PC-9 (cell line): ENCODE measurements at regions of chr17 and their contacts with region 1.

Region 1: DNA sequence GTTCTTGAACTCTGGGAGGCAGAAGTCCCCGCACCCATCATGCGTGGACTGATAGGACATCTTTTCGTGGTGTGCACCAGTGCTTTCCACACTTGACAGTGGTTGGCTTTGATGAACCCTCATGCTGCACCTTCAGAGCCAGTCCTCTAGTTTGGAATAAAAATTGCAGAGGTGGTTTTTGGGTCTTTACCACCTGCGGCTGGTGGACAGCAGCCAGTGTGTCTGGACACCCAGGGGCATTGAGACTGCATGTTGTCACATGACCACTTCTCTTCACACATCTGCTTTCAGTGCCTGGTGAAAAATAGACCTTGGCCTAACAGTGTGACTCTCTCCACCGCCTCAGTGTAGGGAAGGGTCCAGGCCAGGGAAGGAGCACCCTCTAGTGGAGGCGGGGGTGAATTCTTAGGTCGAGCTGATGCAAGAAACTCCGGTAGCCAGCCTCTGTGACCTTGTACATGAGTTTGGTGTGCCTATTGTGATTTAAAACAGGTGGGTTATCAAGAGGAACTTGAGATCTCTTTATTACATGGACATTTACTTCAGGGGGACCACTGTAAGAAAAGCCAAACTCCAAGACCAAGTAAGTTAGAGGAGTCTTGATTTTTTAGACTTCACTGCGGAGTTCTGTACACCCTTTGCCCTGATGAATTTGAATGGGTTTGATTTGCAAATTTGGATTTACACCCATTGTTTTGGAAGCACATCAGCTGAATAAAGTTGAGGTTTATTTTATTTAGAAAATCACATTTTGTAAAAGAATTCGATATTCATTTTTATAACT is 17.9 kb downstream of the GOSR2 start:
- DNase-seq: peak; percentile 50 to 64
- H3K4me3 ChIP-seq: no peak overlapping the region
- H3K27ac ChIP-seq: no peak overlapping the region
- H3K4me1 ChIP-seq: peaks cover 28% of the 10 kb centered on the region
- H3K27me3 ChIP-seq: no peaks in the 10 kb centered on the region
- CTCF ChIP-seq: peak; percentile 89

Region 2: DNA sequence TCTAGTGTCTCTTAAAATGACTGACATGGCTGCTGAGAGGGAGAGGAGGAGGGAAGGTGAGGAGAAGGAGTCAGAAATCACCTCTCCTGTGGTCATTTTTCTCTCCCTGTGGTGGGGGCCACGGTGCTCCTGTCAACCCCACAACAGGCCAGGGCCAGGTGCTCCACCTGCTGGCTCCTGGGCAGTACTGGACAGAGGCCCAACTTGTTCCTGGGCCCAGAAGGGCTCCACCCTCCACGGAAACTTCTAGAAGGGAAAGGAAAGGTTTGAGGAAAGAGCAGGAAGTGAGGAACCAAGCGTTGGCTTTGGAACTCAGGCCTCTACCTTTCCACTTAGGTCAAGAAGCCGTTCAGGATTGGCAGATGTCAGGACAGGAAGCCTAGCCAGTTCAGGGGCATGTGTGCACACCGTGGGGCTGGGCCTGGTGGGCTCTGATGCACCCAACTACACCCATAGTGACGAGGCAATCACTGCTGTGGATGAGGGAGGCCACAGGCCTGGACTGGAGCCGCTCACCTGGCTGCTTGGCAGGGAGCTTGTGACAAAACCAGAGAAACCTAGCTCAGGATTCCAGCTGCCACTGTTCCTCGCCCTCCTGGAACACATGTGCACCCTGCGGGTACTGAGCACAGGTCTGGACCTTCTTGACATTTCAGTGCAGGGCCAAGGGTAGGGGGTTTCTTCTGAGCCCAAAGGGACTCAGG is 158.4 kb before region 1 on chr17:
- CTCF ChIA-PET with region 1: no interaction called
- POLR2A ChIA-PET with region 1: no interaction called
- intact Hi-C with region 1: loop called (anchors 10 kb)
- DNase-seq: peak; percentile 52 to 57
- H3K4me3 ChIP-seq: no peak overlapping the region
- H3K27ac ChIP-seq: no peak overlapping the region
- H3K4me1 ChIP-seq: peaks cover 33% of the 10 kb centered on the region
- H3K27me3 ChIP-seq: no peaks in the 10 kb centered on the region
- CTCF ChIP-seq: peak; percentile 93

Region 3: DNA sequence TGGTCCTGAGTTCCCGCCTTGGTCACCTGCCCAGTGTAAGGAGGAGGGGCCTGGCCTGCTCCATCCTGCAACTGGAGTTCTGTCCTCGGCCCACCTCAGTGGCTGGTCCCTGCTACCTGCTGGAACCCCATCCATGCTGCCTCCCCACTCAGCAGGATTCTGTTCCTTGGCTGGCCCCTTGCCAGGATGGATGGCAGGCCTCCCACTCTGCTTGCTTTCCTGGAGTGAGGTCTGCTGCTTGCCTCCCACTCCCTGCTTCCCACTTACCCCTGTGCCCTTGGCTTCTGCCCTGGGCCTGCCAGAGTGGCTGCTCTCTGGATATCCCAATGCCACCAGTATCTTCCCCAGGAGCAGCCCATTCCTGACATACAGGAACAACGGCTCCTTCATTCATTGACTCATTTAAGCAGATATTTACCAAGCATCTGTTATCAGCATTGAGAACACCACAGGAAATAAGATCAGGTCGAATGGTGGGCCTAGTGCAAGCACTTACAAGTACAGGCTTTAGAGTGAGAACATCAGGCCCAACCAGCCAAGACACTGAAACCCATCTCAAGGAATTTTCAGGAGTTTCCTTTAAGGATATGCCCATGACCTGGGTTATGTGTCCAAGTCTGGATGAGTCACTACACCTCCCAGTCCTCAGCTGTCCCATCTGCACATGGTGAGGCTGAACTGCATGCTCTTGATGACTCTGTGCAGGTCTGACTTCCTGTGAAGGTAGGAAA is 55.2 kb after region 1 on chr17:
- CTCF ChIA-PET with region 1: interaction called, 10 read pairs
- POLR2A ChIA-PET with region 1: interaction called, 4 read pairs
- intact Hi-C with region 1: loop called (anchors 1 kb)
- DNase-seq: no peak
- H3K4me3 ChIP-seq: no peak overlapping the region
- H3K27ac ChIP-seq: no peak overlapping the region
- H3K4me1 ChIP-seq: no peaks in the 10 kb centered on the region
- H3K27me3 ChIP-seq: no peaks in the 10 kb centered on the region
- CTCF ChIP-seq: no peak

Region 4: GRCh38 chr17:47315451-47316266 is 374.8 kb after region 1 on chr17:
- CTCF ChIA-PET with region 1: interaction called, 3 read pairs
- POLR2A ChIA-PET with region 1: no interaction called
- intact Hi-C with region 1: loop called (anchors 1 kb)
- DNase-seq: peak in 1 of 2 experiments; percentile 87
- H3K4me3 ChIP-seq: no peak overlapping the region
- H3K27ac ChIP-seq: peak overlapping the region; percentile 73
- H3K4me1 ChIP-seq: peaks cover 39% of the 10 kb centered on the region
- H3K27me3 ChIP-seq: no peaks in the 10 kb centered on the region
- CTCF ChIP-seq: peak; percentile 97

Region 5: GRCh38 chr17:47615766-47616424 is 675.1 kb after region 1 on chr17:
- CTCF ChIA-PET with region 1: no interaction called
- POLR2A ChIA-PET with region 1: no interaction called
- intact Hi-C with region 1: loop called (anchors 10 kb)
- DNase-seq: peak in 1 of 2 experiments; percentile 49
- H3K4me3 ChIP-seq: no peak overlapping the region
- H3K27ac ChIP-seq: 0 out of 2 replicates have a peak overlapping the region, but pooled peaks have one; percentile 7
- H3K4me1 ChIP-seq: peaks cover 30% of the 10 kb centered on the region
- H3K27me3 ChIP-seq: no peaks in the 10 kb centered on the region
- CTCF ChIP-seq: peak; percentile 93

Region 6: DNA sequence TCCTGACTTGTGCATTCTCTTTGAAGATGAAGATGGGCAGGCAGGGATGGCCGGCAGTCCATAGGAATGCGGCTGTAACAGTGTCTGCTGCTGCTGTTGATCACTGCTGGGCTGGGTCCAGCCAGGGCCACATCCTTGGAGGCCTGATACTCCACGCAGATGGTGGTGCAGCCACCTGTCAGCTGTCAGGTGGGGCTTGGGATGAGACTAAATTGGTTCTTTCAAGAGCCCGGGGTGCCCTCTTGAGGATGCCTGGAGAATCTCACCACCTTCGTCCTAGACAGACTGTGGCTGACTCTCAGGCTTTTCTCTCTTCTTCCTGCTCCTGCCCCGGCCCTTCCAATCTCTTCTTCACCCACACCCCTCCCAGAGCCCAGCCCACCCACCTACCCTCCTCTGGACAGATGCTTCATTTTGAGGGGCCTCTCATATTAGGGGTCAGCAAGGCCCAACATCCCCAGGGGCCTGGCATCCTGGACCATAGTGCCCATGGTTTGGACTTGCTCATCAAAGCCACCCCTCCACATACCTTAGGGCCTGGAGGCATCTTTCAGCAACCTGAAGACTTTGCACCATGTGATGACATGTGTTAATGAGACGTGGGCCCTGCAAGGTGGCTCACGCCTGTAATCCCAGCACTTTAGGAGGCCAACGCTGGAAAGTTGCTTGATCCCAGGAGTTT is 861.7 kb after region 1 on chr17:
- CTCF ChIA-PET with region 1: no interaction called
- POLR2A ChIA-PET with region 1: no interaction called
- intact Hi-C with region 1: loop called (anchors 5 kb)
- DNase-seq: peak; percentile 48 to 62
- H3K4me3 ChIP-seq: no peak overlapping the region
- H3K27ac ChIP-seq: no peak overlapping the region
- H3K4me1 ChIP-seq: no peaks in the 10 kb centered on the region
- H3K27me3 ChIP-seq: 0 out of 2 replicates have a peak, but pooled peaks cover 2% of the 10 kb centered on the region
- CTCF ChIP-seq: peak; percentile 84